Spleen (tissue), 13 donors: ENCODE measurements at regions of chr19 and their contacts with region 1.

Region 1: DNA sequence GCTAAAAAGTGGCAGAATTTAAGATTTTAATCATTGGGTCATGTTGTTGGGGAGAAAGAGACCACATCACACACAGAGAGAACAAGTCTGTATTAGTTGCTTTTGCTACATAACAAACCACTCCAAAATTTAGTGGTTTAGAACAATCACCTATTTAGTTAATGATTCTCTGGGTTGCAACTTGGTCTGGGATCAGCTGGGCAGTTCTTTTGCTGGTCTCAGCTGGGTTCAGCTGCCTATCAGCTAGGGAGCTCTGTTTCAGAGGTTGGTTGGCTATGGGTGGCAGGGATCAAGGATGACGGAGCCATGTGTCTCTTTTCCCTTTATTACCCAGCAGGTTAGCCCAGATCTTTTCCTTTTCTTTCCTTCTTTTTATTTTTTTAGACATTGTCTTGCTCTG is 8.9 kb downstream of the PINLYP start:
- DNase-seq: no peak
- H3K4me3 ChIP-seq: no peak overlapping the region
- H3K27ac ChIP-seq: peak overlapping the region in 7 of 8 donors; percentile 37 to 70 (median 59)
- H3K4me1 ChIP-seq: peaks cover 4 to 56% (median 36%) of the 10 kb centered on the region in 6 donors
- H3K27me3 ChIP-seq: no peaks in the 10 kb centered on the region
- CTCF ChIP-seq: no peak
- POLR2A ChIP-seq: no peak

Region 2: DNA sequence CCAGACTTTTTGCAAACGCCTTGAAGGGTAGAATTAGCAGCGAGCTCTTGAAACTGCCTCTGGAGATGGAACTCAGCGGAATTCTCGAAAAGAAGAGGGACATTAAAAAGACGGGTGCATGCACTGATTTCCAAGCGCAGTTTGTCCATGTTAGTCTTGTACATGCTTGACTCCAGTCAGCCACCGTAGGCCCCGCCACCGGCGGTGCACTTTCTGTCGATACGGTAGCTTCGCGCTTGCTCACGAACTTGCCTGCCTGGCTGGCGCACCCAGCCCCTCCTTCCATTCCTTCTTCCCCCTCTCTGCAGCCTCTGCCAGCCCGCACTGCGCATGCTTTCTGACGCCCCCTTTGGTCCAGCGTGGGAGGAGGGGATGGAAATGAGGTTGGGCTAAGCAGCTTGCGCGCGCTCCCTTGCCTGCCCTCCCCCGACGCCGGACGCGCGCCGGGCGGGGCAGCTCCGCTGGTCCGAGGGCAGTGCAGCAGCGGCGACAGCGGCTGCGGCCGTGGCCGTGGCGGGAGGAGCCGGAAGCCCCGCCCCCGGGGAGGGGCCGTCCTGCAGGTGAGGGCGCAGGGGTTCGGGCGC is 51.4 kb before region 1 on chr19 and contains the start of gene ZNF575:
- intact Hi-C with region 1: loop called (anchors 10 kb)
- DNase-seq: peak; percentile 97
- H3K4me3 ChIP-seq: peak within 1 kb of the TSS; percentile 50 to 90 (median 73)
- H3K27ac ChIP-seq: peak within 1 kb of the TSS; percentile 71 to 95 (median 87)
- H3K4me1 ChIP-seq: peaks cover 7 to 59% (median 36%) of the 10 kb centered on the region in 6 donors
- H3K27me3 ChIP-seq: no peaks in the 10 kb centered on the region
- CTCF ChIP-seq: peak in 3 of 11 experiments; percentile 9 to 29 (median 26)
- POLR2A ChIP-seq: no peak
- total RNA-seq, gene ZNF575: 1.0 to 4.3 (median 2.4) TPM in 5 of 7 donors, not detected in the others